ENCODE measurements at regions of chr7 and their contacts with region 1.

Region 1: GRCh38 chr7:87059525-87060287 is at the start of gene ELAPOR2:
- DNase-seq: peak; percentile 32
- ATAC-seq: peak; percentile 99
- H3K4me3 ChIP-seq: peak within 1 kb of the TSS; percentile 53 to 76 (median 59); a peak in 5 of 6 replicates
- H3K27ac ChIP-seq: no peak within 1 kb of the TSS
- H3K4me1 ChIP-seq: peaks cover 14% of the 10 kb centered on the region
- H3K27me3 ChIP-seq: peaks cover 2 to 27% of the 10 kb centered on the region in 2 experiments; a peak in 3 of 5 replicates
- CTCF ChIP-seq: peak; percentile 66
- EP300 ChIP-seq: no peak
- POLR2A ChIP-seq: no peak
- RAD21 ChIP-seq: no peak
- total RNA-seq, gene ELAPOR2: 8.4 and 10.3 TPM in 2 replicates

Region 2: GRCh38 chr7:86926732-86927131 is 133.0 kb before region 1 on chr7:
- CTCF ChIA-PET with region 1: no interaction called
- POLR2A ChIA-PET with region 1: no interaction called
- in situ Hi-C with region 1: no loop called
- intact Hi-C with region 1: loop called (anchors 5 kb)
- DNase-seq: peak; percentile 28
- ATAC-seq: peak; percentile 46; the same call in 2 of the 3 replicates
- H3K4me3 ChIP-seq: no peak overlapping the region
- H3K27ac ChIP-seq: no peak overlapping the region
- H3K4me1 ChIP-seq: no peaks in the 10 kb centered on the region
- H3K27me3 ChIP-seq: no peaks in the 10 kb centered on the region
- CTCF ChIP-seq: peak; percentile 65
- EP300 ChIP-seq: no peak
- POLR2A ChIP-seq: no peak
- RAD21 ChIP-seq: no peak

Region 3: DNA sequence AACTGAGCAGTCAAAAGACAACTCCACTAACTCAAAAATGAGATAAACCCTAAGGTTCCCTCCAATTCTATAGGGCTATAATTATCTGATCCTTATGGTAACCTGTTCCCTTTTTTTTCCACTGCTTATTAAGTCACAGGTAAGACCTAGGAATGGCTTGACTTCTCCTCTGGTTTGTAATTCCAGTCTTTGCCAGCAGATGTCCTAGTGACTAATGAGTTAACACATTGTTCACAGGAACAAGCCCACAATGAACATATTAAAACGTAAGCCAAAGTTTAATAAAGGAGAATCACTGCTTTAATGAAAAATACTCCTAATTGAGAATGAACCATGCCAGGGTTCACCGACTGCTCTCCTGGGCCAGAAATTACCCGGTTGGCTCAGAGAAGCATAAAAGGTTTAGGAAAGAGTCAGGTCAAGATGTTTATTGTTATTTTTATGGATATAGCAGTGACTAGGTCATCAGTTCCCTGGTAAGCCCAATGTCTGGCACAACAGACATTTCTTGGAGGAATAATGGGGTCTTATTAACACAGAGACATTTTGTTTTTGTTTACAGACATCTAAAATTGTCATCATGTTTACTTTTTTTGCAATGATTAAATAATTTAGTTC is 120.4 kb before region 1 on chr7:
- CTCF ChIA-PET with region 1: interaction called, 3 read pairs
- POLR2A ChIA-PET with region 1: no interaction called
- in situ Hi-C with region 1: no loop called
- intact Hi-C with region 1: loop called (anchors 5 kb)
- DNase-seq: peak; percentile 67
- ATAC-seq: peak; percentile 84
- H3K4me3 ChIP-seq: no peak overlapping the region
- H3K27ac ChIP-seq: no peak overlapping the region
- H3K4me1 ChIP-seq: no peaks in the 10 kb centered on the region
- H3K27me3 ChIP-seq: no peaks in the 10 kb centered on the region
- CTCF ChIP-seq: peak; percentile 72
- EP300 ChIP-seq: no peak
- POLR2A ChIP-seq: no peak
- RAD21 ChIP-seq: peak; percentile 46; the same call in 1 of the 2 replicates